ENCODE measurements at regions of chr3 and their contacts with region 1.

Region 1: DNA sequence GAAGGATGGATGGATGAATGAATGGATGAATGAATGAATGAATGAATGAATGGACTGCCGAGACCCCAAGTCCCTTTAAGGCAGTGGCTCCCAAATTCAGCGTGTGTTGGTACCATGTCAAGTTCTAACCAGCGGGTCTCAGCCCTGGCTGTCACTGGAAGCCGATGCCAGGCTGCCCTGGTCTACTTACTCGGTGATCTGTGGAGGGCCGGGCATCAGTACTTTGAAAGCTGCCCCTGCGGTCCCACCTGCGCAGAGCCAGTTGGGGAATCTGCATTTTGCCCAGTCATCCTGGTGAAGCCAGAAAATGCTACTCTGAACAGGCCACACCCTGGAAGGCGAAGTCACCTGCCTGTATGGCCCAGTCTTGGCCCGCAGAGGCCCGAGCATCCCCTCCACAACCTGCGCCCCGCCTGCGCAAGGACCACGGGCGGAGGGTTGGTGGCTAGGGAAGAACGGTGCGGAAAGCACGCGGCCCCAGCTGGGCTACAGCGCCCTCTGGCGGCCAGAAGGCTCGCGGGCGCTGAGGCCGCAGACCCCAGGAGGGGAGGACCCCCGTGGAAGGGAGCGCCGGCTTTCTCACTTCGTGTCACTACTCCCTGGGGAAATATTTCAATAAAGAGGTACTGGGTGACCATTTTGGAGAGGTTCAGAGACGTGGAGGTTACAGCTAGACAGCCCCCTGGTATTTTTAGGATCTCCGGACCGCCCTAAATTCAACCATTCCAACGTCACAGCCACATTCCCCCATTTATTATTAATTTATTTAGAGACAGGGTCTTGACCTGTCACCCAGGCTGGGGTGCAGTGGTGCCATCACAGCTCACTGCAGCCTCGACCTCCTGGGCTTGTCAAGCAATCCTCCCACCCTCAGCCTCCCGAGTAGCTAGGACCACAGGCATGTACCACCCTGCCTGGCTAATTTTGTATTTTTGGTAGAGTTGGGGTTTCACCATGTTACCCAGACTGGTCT is 34.9 kb downstream of the PRKCD start:
- DNase-seq: peak; percentile 28
- H3K4me3 ChIP-seq: no peak overlapping the region
- H3K27ac ChIP-seq: no peak overlapping the region
- H3K4me1 ChIP-seq: peaks cover 11% of the 10 kb centered on the region
- H3K27me3 ChIP-seq: no peaks in the 10 kb centered on the region
- CTCF ChIP-seq: peak; percentile 98 to 99
- POLR2A ChIP-seq: no peak

Region 2: DNA sequence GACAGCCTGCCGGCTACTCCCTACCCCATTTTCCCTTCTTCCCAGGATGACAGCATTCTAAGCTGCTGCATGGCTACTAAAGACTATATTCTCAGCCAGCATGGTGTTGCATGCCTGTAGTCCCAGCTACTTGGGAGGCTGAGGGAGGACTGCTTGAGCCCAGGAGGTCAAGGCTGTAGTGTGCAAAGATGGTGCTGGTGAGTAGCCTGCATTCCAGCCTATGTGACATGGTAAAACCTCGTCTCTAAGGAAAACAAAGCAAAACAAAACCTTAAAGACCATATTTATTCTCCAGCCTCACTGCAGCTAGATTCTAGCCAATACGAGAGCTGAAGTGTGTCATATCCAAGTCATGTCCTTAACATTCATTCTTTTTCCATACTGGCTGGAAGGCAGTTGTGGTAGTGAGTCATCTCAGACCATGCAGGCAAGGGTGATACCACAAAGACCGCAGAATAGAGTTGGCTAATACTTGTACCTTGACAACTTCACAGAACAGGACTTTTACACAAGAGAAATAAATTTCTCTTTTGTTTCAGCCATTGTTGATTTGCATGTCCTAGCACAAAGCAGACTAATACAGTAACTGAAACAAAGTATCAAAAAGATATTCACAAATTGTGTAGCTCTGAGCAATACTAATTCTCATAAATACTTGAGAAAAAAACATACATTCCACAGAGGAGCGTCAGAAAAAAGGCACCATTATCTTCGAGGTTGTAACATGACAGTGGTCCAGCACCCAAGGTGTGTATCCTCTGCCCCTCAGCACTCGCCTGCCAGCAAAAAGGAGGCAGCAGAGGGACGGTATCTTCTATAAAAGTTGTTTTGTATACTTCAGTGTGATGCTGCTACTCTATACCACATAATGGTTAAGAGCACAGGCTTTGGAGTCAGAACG is 525.0 kb before region 1 on chr3:
- CTCF ChIA-PET with region 1: no interaction called
- POLR2A ChIA-PET with region 1: interaction called, 10 read pairs
- dilution Hi-C with region 1: no loop called
- intact Hi-C with region 1: no loop called
- DNase-seq: peak; percentile 95
- H3K4me3 ChIP-seq: no peak overlapping the region
- H3K27ac ChIP-seq: peak overlapping the region; percentile 88
- H3K4me1 ChIP-seq: peaks cover 21% of the 10 kb centered on the region
- H3K27me3 ChIP-seq: no peaks in the 10 kb centered on the region
- CTCF ChIP-seq: no peak
- POLR2A ChIP-seq: no peak

Region 3: DNA sequence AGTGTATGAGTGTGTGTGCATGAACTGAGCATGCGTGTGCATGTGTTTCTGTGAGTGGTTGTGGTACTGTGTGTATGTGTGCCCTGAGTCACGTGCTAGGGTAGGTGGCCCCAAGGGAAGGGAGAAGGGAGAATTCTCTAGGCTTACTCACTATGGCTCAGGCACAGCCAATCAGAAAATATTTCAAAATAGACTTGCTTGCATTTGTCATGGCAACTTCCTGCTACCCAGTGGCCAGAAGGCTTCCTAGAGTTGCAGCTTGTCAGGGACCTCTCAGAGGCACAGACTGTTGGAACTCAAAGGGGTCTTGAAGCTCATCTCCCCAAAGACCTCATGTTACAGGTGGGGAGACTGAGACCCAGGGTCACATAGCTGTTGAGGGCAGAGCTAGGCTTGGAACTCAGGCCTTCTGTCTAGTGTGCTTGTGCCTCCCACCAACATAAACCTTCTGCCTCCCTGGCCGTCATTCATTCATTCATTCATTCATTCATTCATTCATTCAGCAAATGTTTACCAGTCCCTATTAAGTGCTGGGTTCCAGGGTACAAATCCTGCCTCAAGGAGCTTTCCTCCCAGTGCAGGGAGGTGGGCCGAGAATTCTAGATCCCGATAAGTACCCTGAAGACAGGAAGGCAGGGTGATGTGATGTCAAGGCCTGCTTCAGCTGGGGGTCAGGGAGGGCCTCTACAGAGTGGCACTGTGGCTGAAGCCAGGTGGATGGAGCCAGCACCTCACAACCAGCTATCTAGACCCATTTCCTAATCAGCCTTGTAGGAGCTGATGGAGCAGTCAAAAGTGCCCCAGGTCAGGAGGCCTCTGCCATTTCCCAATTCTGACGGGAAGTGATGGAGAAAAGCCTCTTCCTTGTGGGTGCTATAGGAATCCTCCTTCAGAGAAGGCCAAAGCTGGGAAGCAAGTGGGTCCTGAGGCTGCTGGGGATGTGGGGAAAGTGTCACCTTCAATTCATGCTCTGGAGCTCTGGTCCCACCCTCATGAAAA is 54.7 kb before region 1 on chr3:
- CTCF ChIA-PET with region 1: interaction called, 199 read pairs
- POLR2A ChIA-PET with region 1: no interaction called
- dilution Hi-C with region 1: no loop called
- intact Hi-C with region 1: no loop called
- DNase-seq: no peak
- H3K4me3 ChIP-seq: no peak overlapping the region
- H3K27ac ChIP-seq: no peak overlapping the region
- H3K4me1 ChIP-seq: no peaks in the 10 kb centered on the region
- H3K27me3 ChIP-seq: no peaks in the 10 kb centered on the region
- CTCF ChIP-seq: no peak
- POLR2A ChIP-seq: no peak

Region 4: DNA sequence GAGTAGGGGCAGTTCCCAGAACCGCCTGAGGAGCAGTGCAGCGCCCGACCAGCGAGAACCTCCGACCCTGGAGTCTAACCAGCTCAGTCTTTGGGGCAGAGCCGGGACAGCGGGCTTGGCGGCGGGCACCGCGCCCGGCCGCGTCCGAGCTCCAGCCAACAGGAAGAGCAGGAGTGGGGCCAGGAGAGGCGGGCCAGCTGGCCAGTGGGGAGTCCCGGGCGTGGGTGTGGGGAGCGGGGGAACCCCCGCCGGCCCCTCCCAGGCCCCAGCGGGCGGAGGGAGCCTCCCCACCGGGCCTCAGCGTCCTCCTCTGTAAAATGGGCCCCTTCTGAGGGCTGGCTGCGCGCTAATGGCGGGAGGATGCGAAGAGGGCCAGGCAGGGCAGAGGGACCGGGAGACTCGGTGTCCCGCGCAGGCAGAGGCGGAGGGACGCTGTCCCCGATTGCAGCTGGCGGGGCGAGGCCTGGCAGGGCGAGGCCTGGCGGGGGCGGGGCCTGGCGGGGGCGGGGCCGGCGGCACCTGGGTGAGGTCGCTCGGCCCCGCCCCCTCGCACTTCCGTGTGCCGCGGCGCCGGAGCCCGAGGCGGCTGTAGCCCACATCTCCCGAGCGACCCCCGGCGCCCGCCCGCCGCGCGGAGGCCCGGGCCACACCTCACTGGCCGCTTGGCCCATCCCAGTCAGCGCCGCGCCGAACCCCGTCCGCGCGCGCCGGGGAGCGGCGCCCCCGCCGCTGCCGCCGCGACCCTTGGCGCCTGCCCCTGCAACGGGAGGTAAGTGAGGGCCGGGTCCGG is 35.0 kb before region 1 on chr3 and contains the start of gene PRKCD:
- CTCF ChIA-PET with region 1: interaction called, 22 read pairs
- POLR2A ChIA-PET with region 1: no interaction called
- dilution Hi-C with region 1: no loop called
- intact Hi-C with region 1: loop called (anchors 2 kb)
- DNase-seq: peak; percentile 78
- H3K4me3 ChIP-seq: peak within 1 kb of the TSS; percentile 57 to 87 (median 64)
- H3K27ac ChIP-seq: peak within 1 kb of the TSS; percentile 57
- H3K4me1 ChIP-seq: peaks cover 21% of the 10 kb centered on the region
- H3K27me3 ChIP-seq: peaks cover 0 to 2% of the 10 kb centered on the region in 2 experiments
- CTCF ChIP-seq: peak; percentile 29 to 63
- POLR2A ChIP-seq: peak; percentile 32
- total RNA-seq, gene PRKCD: 15.5 and 17.5 TPM in 2 replicates

Region 5: GRCh38 chr3:53287131-53287629 is 91.3 kb after region 1 on chr3:
- CTCF ChIA-PET with region 1: no interaction called
- POLR2A ChIA-PET with region 1: no interaction called
- dilution Hi-C with region 1: no loop called
- intact Hi-C with region 1: no loop called
- DNase-seq: no peak
- H3K4me3 ChIP-seq: no peak overlapping the region
- H3K27ac ChIP-seq: no peak overlapping the region
- H3K4me1 ChIP-seq: no peaks in the 10 kb centered on the region
- H3K27me3 ChIP-seq: no peaks in the 10 kb centered on the region
- CTCF ChIP-seq: no peak
- POLR2A ChIP-seq: no peak

Region 6: GRCh38 chr3:53996141-53996861 is 800.4 kb after region 1 on chr3:
- CTCF ChIA-PET with region 1: no interaction called
- POLR2A ChIA-PET with region 1: no interaction called
- dilution Hi-C with region 1: no loop called
- intact Hi-C with region 1: no loop called
- DNase-seq: no peak
- H3K4me3 ChIP-seq: no peak overlapping the region
- H3K27ac ChIP-seq: no peak overlapping the region
- H3K4me1 ChIP-seq: no peaks in the 10 kb centered on the region
- H3K27me3 ChIP-seq: no peaks in the 10 kb centered on the region
- CTCF ChIP-seq: no peak
- POLR2A ChIP-seq: no peak

Measured in endothelial cell of umbilical vein (primary cell).